Dorsolateral prefrontal cortex (tissue), 120 donors: ENCODE measurements at regions of chr7 and their contacts with region 1.

Region 1: GRCh38 chr7:14717816-14718215 is 184.7 kb downstream of the DGKB start:
- DNase-seq: no peak
- H3K4me3 ChIP-seq: peak overlapping the region in 3 of 59 donors; percentile 7 to 24 (median 24)
- H3K27ac ChIP-seq: no peak overlapping the region
- H3K27me3 ChIP-seq: no peaks in the 10 kb centered on the region
- CTCF ChIP-seq: peak; percentile 19 to 87 (median 69)

Region 2: GRCh38 chr7:15015545-15016326 is 297.9 kb after region 1 on chr7:
- intact Hi-C with region 1: loop called (anchors 2 to 5 kb)
- DNase-seq: peak in 3 of 10 donors; percentile 6 to 50 (median 15)
- H3K4me3 ChIP-seq: peak overlapping the region in 54 of 59 donors; percentile 3 to 52 (median 29)
- H3K27ac ChIP-seq: peak overlapping the region in 45 of 59 donors; percentile 3 to 81 (median 55)
- H3K27me3 ChIP-seq: no peaks in the 10 kb centered on the region
- CTCF ChIP-seq: peak; percentile 51 to 88 (median 74)

Region 3: GRCh38 chr7:16062269-16062668 is 1344.5 kb after region 1 on chr7:
- intact Hi-C with region 1: loop called in 1 of 2 experiments (anchors 10 kb)
- DNase-seq: no peak
- H3K4me3 ChIP-seq: no peak overlapping the region
- H3K27ac ChIP-seq: no peak overlapping the region
- H3K27me3 ChIP-seq: no peaks in the 10 kb centered on the region
- CTCF ChIP-seq: no peak